ENCODE measurements at regions of chr1 and their contacts with region 1.

Region 1: DNA sequence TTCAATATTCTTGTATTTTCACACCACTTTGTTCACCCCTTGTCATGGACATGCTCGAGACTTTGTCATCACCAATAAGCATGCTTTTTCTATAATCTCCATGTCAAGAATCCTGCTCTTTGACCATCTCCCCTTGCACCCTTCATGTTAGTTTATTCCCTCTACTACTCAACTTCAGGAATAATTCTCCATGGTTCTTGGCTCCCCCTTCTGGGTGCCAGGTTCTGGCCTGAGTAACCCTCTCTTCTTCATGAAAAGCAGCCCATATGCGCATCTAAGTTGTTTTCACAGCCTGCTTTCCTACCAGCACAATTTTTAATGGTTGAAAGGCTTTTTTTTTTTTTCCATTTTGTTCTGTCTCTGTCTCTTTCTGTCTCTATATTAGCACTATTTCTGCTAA is 160.7 kb downstream of the LEPR start:
- DNase-seq: no peak
- ATAC-seq: no peak
- H3K4me3 ChIP-seq: no peak overlapping the region
- H3K27ac ChIP-seq: no peak overlapping the region
- H3K4me1 ChIP-seq: no peaks in the 10 kb centered on the region
- H3K27me3 ChIP-seq: no peaks in the 10 kb centered on the region
- CTCF ChIP-seq: peak in 2 of 5 experiments; percentile 15 to 21
- POLR2A ChIP-seq: no peak

Region 2: GRCh38 chr1:65431111-65431705 is 149.9 kb before region 1 on chr1:
- in situ Hi-C with region 1: no loop called
- intact Hi-C with region 1: loop called (anchors 2 kb)
- DNase-seq: no peak
- ATAC-seq: no peak
- H3K4me3 ChIP-seq: no peak overlapping the region
- H3K27ac ChIP-seq: peak overlapping the region in 2 of 4 donors; percentile 39 to 64
- H3K4me1 ChIP-seq: no peaks in the 10 kb centered on the region
- H3K27me3 ChIP-seq: no peaks in the 10 kb centered on the region
- CTCF ChIP-seq: peak in 4 of 5 experiments; percentile 23 to 60 (median 47)
- POLR2A ChIP-seq: no peak

Region 3: DNA sequence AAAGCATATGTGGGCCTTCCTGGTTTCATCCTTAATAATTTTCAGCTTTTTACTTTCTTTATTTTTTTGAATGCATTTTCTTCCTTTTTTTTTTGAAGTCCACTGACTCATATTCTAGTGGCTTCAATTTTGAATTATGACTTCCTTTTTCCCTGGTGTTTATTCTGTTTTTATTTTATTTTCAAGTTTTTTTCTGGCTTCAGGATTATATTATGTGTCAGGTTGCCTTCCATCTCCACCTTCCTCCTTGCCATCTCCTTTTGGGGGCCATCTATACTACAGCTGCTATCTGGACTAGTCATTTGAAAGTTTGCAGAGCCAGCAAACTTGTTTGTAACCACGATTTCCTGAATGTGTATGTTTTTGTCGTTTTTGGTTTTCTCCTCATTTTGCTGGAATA is 43.0 kb before region 1 on chr1:
- in situ Hi-C with region 1: no loop called
- intact Hi-C with region 1: no loop called
- DNase-seq: no peak
- ATAC-seq: no peak
- H3K4me3 ChIP-seq: no peak overlapping the region
- H3K27ac ChIP-seq: no peak overlapping the region
- H3K4me1 ChIP-seq: peaks cover 0 to 6% of the 10 kb centered on the region in 2 donors
- H3K27me3 ChIP-seq: no peaks in the 10 kb centered on the region
- CTCF ChIP-seq: no peak
- POLR2A ChIP-seq: no peak

Region 4: GRCh38 chr1:65630855-65631254 is 49.7 kb after region 1 on chr1:
- in situ Hi-C with region 1: loop called in 1 of 4 experiments (anchors 5 kb)
- intact Hi-C with region 1: no loop called
- DNase-seq: no peak
- ATAC-seq: no peak
- H3K4me3 ChIP-seq: no peak overlapping the region
- H3K27ac ChIP-seq: no peak overlapping the region
- H3K4me1 ChIP-seq: no peaks in the 10 kb centered on the region
- H3K27me3 ChIP-seq: no peaks in the 10 kb centered on the region
- CTCF ChIP-seq: no peak
- POLR2A ChIP-seq: no peak

Measured in gastrocnemius medialis (tissue), 4 donors.